Posterior vena cava (tissue), 2 donors: ENCODE measurements at regions of chr19 and their contacts with region 1.

Region 1: GRCh38 chr19:6788896-6789295 is 16.4 kb downstream of the VAV1 start:
- DNase-seq: no peak

Region 2: GRCh38 chr19:7478173-7478842 is 689.4 kb after region 1 on chr19:
- intact Hi-C with region 1: loop called in 1 of 2 experiments (anchors 10 kb)
- DNase-seq: no peak